ENCODE measurements at regions of chr15 and their contacts with region 1.

Region 1: DNA sequence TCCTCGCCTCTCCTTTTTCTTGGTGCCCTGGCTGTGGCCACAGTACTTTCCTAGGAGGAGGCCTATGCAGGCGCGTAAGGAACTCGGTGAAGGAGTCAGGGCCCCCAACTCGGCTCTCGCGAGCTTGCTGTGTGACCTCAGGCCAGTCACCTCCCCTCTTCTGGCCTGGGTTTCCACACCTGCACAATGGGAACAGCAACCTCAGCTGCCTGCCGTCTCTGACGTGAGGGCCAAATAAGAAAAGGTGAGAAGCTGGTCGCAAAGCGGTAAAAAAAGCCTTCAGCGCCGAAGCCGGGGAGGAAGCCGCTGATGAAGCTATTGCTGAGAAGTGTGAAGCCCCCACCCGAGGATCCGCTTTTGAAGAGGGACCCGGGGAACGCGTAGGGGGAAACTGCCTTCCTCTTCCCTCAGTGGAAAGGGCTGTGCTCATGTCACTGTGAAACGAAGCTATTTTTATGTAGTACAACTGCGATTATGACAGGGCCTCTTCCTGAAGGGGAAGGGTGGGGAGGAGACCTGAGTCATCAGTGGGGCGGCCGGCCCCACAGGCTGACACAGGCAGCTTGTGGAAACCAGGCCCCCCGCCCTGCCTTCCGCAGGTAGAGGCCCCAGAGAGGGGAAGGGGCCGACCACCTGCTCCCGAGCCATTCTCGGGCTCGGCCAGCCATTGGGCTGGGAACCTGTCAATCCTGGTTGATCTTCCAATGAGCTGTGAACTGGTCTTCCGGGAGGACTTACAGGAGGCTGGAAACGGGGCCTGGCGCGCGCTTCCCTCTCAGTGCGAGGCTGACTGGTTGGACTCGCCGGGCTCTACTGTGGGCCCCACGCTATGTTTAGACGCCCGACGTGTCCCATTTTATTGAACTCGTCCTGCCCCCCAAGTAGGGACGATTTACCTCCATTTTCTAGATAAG is 18.0 kb upstream of the ANKDD1A start:
- DNase-seq: peak; percentile 99
- ATAC-seq: peak; percentile 79
- H3K4me3 Mint-ChIP-seq: peak overlapping the region; percentile 83
- H3K27ac Mint-ChIP-seq: peak overlapping the region; percentile 99
- H3K4me1 Mint-ChIP-seq: peaks cover 63% of the 10 kb centered on the region
- H3K27me3 Mint-ChIP-seq: no peaks in the 10 kb centered on the region

Region 2: GRCh38 chr15:64284042-64284441 is 609.7 kb before region 1 on chr15:
- CTCF ChIA-PET with region 1: no interaction called
- DNase-seq: no peak
- ATAC-seq: no peak
- H3K4me3 Mint-ChIP-seq: no peak overlapping the region
- H3K27ac Mint-ChIP-seq: no peak overlapping the region
- H3K4me1 Mint-ChIP-seq: peaks cover 6% of the 10 kb centered on the region
- H3K27me3 Mint-ChIP-seq: no peaks in the 10 kb centered on the region

Region 3: DNA sequence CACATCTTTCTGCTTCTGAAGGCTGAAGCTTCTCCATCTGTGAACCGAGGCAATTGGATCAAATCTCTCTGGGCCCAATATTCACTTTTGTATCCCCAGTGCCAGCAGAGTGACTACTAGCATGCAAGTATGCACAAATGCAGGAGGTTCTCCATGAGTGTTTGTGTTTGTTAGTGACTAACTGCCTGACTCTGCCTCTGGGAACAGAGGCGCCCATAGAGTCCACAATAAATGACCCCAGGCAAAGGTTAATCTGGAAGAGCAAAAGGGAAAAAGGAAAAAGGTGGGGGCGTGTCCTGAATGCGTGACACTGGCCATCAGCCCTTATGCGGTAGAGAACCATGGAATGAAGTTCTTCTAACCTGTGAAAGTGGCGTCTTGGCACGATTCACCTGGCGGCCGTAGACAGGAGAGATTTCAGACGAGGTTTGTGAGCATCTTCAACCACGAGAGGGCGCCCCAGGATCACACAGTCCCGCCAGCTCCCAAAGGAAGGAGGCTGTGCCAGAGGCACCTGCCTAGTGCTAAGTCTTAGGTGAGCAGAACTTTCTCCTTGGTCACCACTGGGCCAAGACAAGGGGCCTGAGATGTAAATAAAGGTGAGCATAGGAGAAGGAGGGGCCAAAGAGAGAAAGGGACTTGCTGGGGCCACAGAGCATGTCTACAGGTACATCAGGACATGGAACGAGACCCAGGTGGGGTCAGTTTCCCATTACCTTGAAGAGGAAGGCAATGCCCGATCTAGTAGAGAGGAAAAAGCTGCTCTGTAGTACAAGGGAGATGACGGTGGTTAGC is 162.5 kb before region 1 on chr15:
- CTCF ChIA-PET with region 1: interaction called, 15 read pairs
- DNase-seq: peak; percentile 88
- ATAC-seq: peak; percentile 85
- H3K4me3 Mint-ChIP-seq: no peak overlapping the region
- H3K27ac Mint-ChIP-seq: no peak overlapping the region
- H3K4me1 Mint-ChIP-seq: peaks cover 6% of the 10 kb centered on the region
- H3K27me3 Mint-ChIP-seq: no peaks in the 10 kb centered on the region

Region 4: GRCh38 chr15:64825431-64826294 is 68.1 kb before region 1 on chr15 and contains the start of gene PIF1:
- CTCF ChIA-PET with region 1: interaction called, 20 read pairs
- DNase-seq: peak; percentile 97
- ATAC-seq: peak; percentile 93
- H3K4me3 Mint-ChIP-seq: peak within 1 kb of the TSS; percentile 98
- H3K27ac Mint-ChIP-seq: peak within 1 kb of the TSS; percentile 93
- H3K4me1 Mint-ChIP-seq: peaks cover 33% of the 10 kb centered on the region
- H3K27me3 Mint-ChIP-seq: no peaks in the 10 kb centered on the region
- total RNA-seq, gene PIF1: 59.5 to 85.5 TPM

Region 5: DNA sequence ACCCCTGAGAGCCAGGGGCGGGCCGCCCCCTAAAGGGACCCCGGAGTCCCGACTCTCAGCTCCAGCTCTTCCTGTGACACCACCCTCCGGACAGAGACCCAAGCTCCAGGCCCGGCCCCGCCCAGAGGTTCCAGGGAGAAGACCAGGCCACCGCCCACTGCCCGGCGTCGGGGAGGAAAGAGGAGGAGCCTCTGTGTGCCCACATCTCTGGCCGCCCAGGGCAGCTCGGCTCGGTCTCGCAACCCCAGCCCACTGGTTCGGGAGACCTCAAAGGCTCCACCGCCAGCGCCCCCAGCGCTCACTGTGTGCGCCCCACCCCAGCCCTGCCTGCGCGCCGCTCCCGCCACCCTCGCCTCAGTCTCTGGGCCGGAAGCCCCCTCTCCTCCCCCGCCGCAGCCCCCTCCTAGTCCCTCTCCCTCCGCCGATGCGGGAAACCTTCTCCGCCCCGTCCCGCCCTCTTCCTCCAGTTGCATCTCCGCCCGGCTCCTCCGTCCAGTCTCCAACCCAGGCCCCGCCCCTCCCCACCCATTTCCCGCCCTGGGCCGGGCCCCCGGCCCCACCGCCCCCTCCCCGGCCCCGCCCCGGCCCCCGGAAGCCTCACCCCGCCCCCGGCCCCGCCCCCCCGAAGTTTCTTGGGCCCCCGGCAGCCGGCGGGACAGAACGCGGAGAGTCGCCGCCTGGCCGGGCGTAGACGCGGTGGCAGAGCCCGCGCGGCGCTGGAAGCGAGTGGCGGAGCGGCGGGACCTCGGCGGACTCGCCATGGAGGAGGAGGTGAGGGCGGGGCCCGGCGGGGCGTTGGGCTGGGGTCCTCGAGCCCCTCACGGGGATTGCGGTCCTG is 52.3 kb before region 1 on chr15 and contains the start of gene PLEKHO2:
- CTCF ChIA-PET with region 1: interaction called, 96 read pairs
- DNase-seq: peak; percentile 97
- ATAC-seq: peak; percentile 78
- H3K4me3 Mint-ChIP-seq: peak within 1 kb of the TSS; percentile 99
- H3K27ac Mint-ChIP-seq: peak within 1 kb of the TSS; percentile 84
- H3K4me1 Mint-ChIP-seq: peaks cover 66% of the 10 kb centered on the region
- H3K27me3 Mint-ChIP-seq: no peaks in the 10 kb centered on the region
- total RNA-seq, gene PLEKHO2: 27.8 to 28.4 TPM

Region 6: GRCh38 chr15:64905119-64905831 is 11.5 kb after region 1 on chr15:
- CTCF ChIA-PET with region 1: interaction called, 42 read pairs
- DNase-seq: peak; percentile 86
- ATAC-seq: peak; percentile 87
- H3K4me3 Mint-ChIP-seq: peak overlapping the region; percentile 66
- H3K27ac Mint-ChIP-seq: peak overlapping the region; percentile 56
- H3K4me1 Mint-ChIP-seq: peaks cover 39% of the 10 kb centered on the region
- H3K27me3 Mint-ChIP-seq: peaks cover 7% of the 10 kb centered on the region

Measured in activated CD8-positive, alpha-beta memory T cell treated with anti-CD3 and anti-CD28 coated beads, Interleukin-2, amount 10 ng/mL, durations not matched to agents 7 days and 5 days (primary cell).